AG04450 (cell line): ENCODE measurements at regions of chr16 and their contacts with region 1.

Region 1: GRCh38 chr16:4517812-4518680 is 20.5 kb downstream of the CDIP1 start:
- DNase-seq: no peak
- H3K4me3 ChIP-seq: no peak overlapping the region
- H3K27ac ChIP-seq: no peak overlapping the region
- H3K27me3 ChIP-seq: no peaks in the 10 kb centered on the region
- CTCF ChIP-seq: peak; percentile 72

Region 2: GRCh38 chr16:4586291-4586690 is 68.2 kb after region 1 on chr16:
- CTCF ChIA-PET with region 1: interaction called, 15 read pairs
- POLR2A ChIA-PET with region 1: no interaction called
- DNase-seq: no peak
- H3K4me3 ChIP-seq: no peak overlapping the region
- H3K27ac ChIP-seq: no peak overlapping the region
- H3K27me3 ChIP-seq: peaks cover 19% of the 10 kb centered on the region
- CTCF ChIP-seq: no peak